ENCODE measurements at regions of chr17 and their contacts with region 1.

Region 1: GRCh38 chr17:8803531-8804420 is 4.6 kb upstream of the MFSD6L start:
- DNase-seq: peak; percentile 14
- H3K4me3 ChIP-seq: no peak overlapping the region
- H3K27ac ChIP-seq: no peak overlapping the region
- H3K4me1 ChIP-seq: no peaks in the 10 kb centered on the region
- H3K27me3 ChIP-seq: no peaks in the 10 kb centered on the region
- CTCF ChIP-seq: no peak

Region 2: DNA sequence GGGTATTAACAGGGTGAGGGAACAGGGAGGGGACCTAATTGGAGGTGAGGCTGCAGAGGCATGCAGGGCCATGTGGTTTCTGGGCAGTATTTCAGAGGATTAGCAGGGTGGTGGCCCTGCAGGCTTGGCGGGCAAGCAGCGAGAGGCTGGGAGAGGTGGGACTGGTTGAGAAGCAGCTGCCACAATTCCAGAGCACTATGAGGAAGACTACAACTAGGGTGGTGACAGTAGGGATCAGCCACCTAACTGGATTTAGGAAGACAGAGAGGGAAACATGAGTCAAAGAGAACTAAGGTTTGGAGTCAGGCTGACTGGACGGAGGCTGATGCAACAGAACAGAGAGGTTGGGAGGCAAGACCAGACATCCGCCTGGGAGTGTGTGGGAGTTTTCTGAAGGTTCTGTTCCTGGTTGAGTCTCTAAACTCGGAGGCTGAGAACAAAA is 697.8 kb before region 1 on chr17:
- intact Hi-C with region 1: no loop called
- DNase-seq: no peak
- H3K4me3 ChIP-seq: no peak overlapping the region
- H3K27ac ChIP-seq: no peak overlapping the region
- H3K4me1 ChIP-seq: no peaks in the 10 kb centered on the region
- H3K27me3 ChIP-seq: no peaks in the 10 kb centered on the region
- CTCF ChIP-seq: no peak

Region 3: DNA sequence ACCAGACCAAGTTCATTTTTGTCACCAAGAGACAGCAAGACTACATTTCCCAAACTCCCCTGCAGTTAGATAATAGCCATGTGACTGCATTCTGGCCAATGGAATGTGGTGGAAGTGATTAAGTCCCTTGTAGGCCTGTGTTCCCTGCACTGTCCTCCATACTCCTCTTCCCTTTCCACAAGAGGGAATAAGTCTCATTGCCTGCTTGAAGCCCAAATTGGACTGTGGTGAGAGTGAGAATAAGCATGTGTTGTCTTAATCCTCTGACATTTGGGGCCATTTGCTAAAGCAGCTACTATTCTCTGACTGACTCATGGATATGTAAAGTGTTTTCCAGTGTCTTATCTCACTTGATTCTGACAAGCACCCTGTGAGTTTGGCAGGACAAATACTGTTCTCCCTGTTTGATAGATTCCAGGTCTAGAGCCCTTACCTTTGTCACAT is 43.0 kb after region 1 on chr17:
- intact Hi-C with region 1: no loop called
- DNase-seq: no peak
- H3K4me3 ChIP-seq: no peak overlapping the region
- H3K27ac ChIP-seq: no peak overlapping the region
- H3K4me1 ChIP-seq: no peaks in the 10 kb centered on the region
- H3K27me3 ChIP-seq: no peaks in the 10 kb centered on the region
- CTCF ChIP-seq: no peak

Region 4: DNA sequence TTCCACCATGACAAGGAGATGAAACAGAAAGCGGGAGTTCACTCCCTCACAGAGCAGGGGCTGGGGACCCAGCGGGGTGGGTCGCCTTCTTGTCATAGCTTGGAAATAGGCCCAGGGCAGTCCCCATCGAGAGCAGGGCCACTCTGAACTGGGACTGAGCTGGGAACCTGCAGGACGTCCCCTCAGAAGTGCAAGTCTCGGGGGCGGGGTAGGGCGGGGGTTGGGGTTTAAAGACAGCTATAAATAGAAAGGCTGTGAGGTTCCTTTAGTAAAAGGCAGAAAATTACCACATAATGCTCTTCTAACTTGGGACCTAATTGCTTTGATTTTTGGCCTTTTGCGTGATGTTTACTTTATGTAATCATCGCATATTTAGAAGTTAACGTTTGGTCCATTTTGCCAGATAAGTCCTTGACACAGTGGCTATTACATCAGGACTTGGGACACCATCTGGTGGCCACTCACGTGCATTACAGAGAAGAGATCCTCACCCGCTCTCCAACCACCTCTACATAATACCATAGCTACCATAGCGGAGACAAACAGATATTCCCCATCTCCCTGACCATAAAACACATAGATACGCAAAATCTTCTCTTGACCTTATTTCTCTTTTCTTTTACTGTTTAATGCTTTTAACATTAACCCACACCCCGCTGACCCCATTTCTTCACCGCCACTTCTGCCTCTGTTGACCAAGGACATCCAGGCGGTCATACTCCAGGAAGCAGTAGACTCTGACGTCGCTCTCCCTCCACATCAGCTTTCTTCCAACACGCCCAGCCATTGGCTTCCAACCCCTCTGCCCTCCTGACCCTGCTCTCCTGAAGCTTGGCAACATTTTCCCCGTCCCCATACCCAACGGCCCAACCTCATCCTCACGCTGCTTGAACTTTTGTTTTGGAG is 91.2 kb after region 1 on chr17:
- intact Hi-C with region 1: loop called (anchors 5 kb)
- DNase-seq: peak; percentile 59
- H3K4me3 ChIP-seq: no peak overlapping the region
- H3K27ac ChIP-seq: no peak overlapping the region
- H3K4me1 ChIP-seq: no peaks in the 10 kb centered on the region
- H3K27me3 ChIP-seq: no peaks in the 10 kb centered on the region
- CTCF ChIP-seq: peak; percentile 67